CD8-positive, alpha-beta T cell (primary cell): ENCODE measurements at regions of chr6 and their contacts with region 1.

Region 1: DNA sequence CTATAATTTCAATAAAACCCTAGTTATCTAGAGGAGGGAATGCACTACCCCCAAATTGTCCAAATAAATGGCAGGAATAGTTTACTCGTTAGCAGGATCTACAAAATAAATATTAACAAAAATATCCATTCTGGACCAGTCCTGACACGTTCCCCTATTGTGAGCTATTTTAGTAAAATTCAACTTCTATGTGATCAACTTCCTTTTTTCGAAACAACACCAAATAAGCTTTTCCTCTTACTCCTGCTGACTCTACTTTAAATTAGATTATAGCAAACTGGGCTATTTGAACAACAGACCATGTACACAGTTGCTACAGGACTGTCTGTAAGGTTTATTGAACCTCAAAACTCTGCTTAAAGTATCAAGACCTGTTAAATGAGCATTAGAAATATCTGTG is 154.3 kb downstream of the IPCEF1 start:
- DNase-seq: no peak
- ATAC-seq: no peak
- H3K4me3 ChIP-seq: no peak overlapping the region
- H3K4me3 Mint-ChIP-seq: no peak overlapping the region
- H3K27ac ChIP-seq: no peak overlapping the region
- H3K27ac Mint-ChIP-seq: peak overlapping the region; percentile 82
- H3K4me1 ChIP-seq: peaks cover 13% of the 10 kb centered on the region
- H3K4me1 Mint-ChIP-seq: peaks cover 77% of the 10 kb centered on the region
- H3K27me3 ChIP-seq: no peaks in the 10 kb centered on the region
- H3K27me3 Mint-ChIP-seq: no peaks in the 10 kb centered on the region
- CTCF ChIP-seq: no peak

Region 2: GRCh38 chr6:154164397-154165165 is 37.8 kb before region 1 on chr6:
- CTCF ChIA-PET with region 1: no interaction called
- POLR2A ChIA-PET with region 1: no interaction called
- intact Hi-C with region 1: loop called (anchors 5 kb)
- DNase-seq: peak in 1 of 9 experiments; percentile 34
- ATAC-seq: peak; percentile 29
- H3K4me3 ChIP-seq: no peak overlapping the region
- H3K4me3 Mint-ChIP-seq: peak overlapping the region; percentile 47
- H3K27ac ChIP-seq: no peak overlapping the region
- H3K27ac Mint-ChIP-seq: peak overlapping the region; percentile 90
- H3K4me1 ChIP-seq: peaks cover 23% of the 10 kb centered on the region
- H3K4me1 Mint-ChIP-seq: peaks cover 48% of the 10 kb centered on the region
- H3K27me3 ChIP-seq: no peaks in the 10 kb centered on the region
- H3K27me3 Mint-ChIP-seq: no peaks in the 10 kb centered on the region
- CTCF ChIP-seq: no peak

Region 3: DNA sequence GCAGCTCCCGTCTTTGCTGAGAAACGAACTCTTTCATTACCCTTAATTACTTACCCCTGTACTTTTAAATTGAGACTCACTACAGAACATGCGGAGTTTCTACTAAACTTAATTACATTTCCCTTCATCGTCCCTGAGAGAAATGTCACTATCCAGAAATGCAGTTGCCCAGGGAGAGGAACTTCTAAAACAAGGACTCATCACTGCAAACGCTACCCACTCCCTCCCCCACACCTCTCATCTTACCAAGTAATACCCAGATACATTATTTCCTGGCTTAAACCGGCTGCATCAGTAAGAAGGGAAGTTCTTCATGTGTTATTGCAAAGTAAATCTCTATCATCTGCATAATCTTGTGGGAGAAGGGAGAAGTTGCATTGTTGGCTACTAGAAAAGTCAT is 16.0 kb after region 1 on chr6:
- CTCF ChIA-PET with region 1: interaction called, 3 read pairs
- POLR2A ChIA-PET with region 1: interaction called, 3 read pairs
- intact Hi-C with region 1: loop called in 1 of 2 experiments (anchors 2 kb)
- DNase-seq: peak in 1 of 9 experiments; percentile 24
- ATAC-seq: peak; percentile 44
- H3K4me3 ChIP-seq: no peak overlapping the region
- H3K4me3 Mint-ChIP-seq: peak overlapping the region; percentile 44
- H3K27ac ChIP-seq: peak overlapping the region in 1 of 2 experiments; percentile 27
- H3K27ac Mint-ChIP-seq: peak overlapping the region; percentile 88
- H3K4me1 ChIP-seq: peaks cover 44% of the 10 kb centered on the region
- H3K4me1 Mint-ChIP-seq: peaks cover 66% of the 10 kb centered on the region
- H3K27me3 ChIP-seq: no peaks in the 10 kb centered on the region
- H3K27me3 Mint-ChIP-seq: no peaks in the 10 kb centered on the region
- CTCF ChIP-seq: no peak